Activated T-helper 1 cell treated with anti-CD3 and anti-CD28 coated beads, Interleukin-12 subunit alpha, Interleukin-12 subunit beta, Interleukin-2, Interleukin-4 antibody, amounts not matched to agents 30 ng/mL and 10 ng/mL and 1 ng/mL, durations not matched to agents 14 hours and 24 hours and 36 hours (primary cell): ENCODE measurements at regions of chr22 and their contacts with region 1.

Region 1: DNA sequence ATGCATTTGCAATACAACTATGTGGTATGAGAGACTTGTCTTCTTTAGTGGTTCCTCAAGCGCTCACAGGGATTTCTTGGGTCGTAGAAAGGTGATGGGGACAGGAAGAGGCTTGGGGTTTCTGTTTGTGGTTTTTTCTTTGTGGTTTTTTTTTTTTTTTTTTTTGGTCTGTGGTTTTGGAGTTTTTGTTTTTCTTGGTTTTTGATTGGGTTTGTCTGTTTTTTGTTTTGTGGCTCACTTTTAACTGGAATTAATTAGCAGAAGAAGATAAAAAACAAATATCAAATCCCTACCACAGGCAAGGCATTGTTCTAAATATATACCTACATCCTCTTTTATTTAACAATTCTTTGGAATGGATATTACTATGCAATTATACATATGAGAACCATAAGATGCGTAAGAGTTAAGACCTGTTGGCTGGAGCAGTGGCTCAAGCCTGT is 5.5 kb downstream of the TTC28 start:
- DNase-seq: peak; percentile 37
- H3K4me3 Mint-ChIP-seq: peak overlapping the region; percentile 73
- H3K27ac Mint-ChIP-seq: peak overlapping the region; percentile 99
- H3K4me1 Mint-ChIP-seq: peaks cover 30% of the 10 kb centered on the region
- H3K27me3 Mint-ChIP-seq: peaks cover 75% of the 10 kb centered on the region

Region 2: GRCh38 chr22:28497188-28497587 is 177.0 kb before region 1 on chr22:
- intact Hi-C with region 1: no loop called
- DNase-seq: no peak
- H3K4me3 Mint-ChIP-seq: no peak overlapping the region
- H3K27ac Mint-ChIP-seq: no peak overlapping the region
- H3K4me1 Mint-ChIP-seq: no peaks in the 10 kb centered on the region
- H3K27me3 Mint-ChIP-seq: peaks cover 46% of the 10 kb centered on the region

Region 3: GRCh38 chr22:28714043-28714442 is 39.9 kb after region 1 on chr22:
- intact Hi-C with region 1: loop called (anchors 2 kb)
- DNase-seq: no peak
- H3K4me3 Mint-ChIP-seq: no peak overlapping the region
- H3K27ac Mint-ChIP-seq: no peak overlapping the region
- H3K4me1 Mint-ChIP-seq: peaks cover 42% of the 10 kb centered on the region
- H3K27me3 Mint-ChIP-seq: no peaks in the 10 kb centered on the region

Region 4: GRCh38 chr22:28750471-28750881 is 76.3 kb after region 1 on chr22:
- intact Hi-C with region 1: no loop called
- DNase-seq: no peak
- H3K4me3 Mint-ChIP-seq: no peak overlapping the region
- H3K27ac Mint-ChIP-seq: no peak overlapping the region
- H3K4me1 Mint-ChIP-seq: peaks cover 10% of the 10 kb centered on the region
- H3K27me3 Mint-ChIP-seq: no peaks in the 10 kb centered on the region

Region 5: DNA sequence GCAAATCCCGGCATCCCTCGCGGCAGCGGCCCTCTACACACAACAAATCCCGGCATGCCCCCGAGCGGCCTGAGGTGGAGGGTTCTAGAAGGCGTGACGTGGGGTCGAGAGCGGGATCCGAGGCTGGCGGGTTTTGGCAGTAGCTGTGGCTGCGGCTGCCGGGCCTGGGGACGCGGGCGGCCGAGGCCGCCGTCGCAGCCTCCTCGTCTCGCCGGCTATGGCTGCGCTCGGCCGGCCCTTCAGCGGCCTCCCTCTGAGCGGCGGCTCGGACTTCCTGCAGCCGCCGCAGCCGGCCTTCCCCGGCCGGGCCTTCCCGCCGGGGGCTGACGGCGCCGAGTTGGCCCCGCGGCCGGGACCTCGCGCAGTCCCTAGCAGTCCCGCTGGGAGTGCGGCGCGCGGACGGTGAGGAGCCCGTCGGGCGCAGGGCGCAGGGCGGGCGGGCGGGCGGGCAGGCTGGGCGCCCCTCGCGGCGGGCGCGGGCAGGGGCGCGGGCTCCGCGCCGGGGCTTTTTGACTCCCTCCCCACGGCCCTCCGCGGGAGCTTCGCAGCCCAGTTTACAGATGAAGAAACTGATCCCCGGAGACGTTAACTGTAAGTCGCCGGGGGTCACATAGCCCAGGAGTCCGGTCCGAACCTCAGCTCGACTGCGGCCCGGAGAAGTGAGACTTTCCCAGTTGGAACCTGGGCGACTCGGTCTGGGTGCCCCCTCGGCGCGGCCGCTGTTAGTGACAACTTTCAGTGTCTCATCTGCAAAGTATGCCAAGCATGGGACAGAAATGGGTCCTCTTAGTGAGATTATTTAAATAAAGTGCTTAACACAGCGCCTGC is 98.7 kb after region 1 on chr22 and contains the start of gene CCDC117:
- intact Hi-C with region 1: loop called (anchors 1 kb)
- DNase-seq: peak; percentile 90
- H3K4me3 Mint-ChIP-seq: peak within 1 kb of the TSS; percentile 100
- H3K27ac Mint-ChIP-seq: peak within 1 kb of the TSS; percentile 100
- H3K4me1 Mint-ChIP-seq: peaks cover 22% of the 10 kb centered on the region
- H3K27me3 Mint-ChIP-seq: peaks cover 4% of the 10 kb centered on the region
- total RNA-seq, gene CCDC117: 46.4 and 52.8 TPM in 2 replicates

Region 6: DNA sequence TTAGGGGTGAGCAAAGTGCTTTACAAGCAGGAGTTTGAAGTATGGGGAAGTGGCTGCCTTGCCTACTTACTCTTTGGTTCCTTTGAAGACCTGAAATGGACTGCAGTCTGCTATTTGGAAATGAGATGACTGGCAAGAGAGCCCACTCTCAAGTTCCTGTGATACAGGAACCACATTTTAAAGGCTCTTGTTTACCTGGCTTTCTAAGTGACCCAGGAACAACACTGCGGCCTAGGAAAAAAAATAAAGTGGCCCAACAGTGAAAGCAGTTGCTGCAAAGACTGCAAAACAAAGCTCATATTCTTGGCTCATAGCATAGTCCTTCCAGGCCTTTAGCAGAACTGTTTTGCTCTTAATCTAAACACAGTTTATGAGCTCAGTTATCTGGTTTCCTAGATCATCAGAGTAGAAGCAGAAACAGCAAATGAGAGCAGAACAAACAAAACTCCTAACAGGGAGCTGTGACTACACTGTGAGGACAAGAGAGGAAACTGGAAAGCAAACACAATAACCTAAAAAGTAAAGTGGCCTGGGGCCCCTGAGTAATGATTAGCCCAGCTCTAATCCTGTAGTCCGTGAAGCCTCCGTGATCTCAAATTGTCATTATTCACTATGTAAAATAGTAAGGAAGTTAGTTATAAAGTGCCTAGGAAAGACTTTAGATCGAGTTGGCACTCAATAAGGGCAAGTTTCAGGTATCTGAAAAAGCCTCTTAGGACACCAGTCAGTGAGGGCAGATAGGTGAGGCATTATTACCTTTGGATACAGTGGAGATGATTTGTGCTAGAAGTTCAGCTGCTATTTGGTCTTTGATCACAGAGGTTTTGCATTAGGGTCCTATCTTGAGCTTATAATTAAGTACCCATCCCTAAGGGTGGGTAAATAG is 109.9 kb after region 1 on chr22:
- intact Hi-C with region 1: no loop called
- DNase-seq: no peak
- H3K4me3 Mint-ChIP-seq: no peak overlapping the region
- H3K27ac Mint-ChIP-seq: no peak overlapping the region
- H3K4me1 Mint-ChIP-seq: peaks cover 24% of the 10 kb centered on the region
- H3K27me3 Mint-ChIP-seq: no peaks in the 10 kb centered on the region

Region 7: GRCh38 chr22:28882878-28883656 is 208.9 kb after region 1 on chr22 and contains the start of gene ZNRF3:
- intact Hi-C with region 1: loop called (anchors 1 kb)
- DNase-seq: peak; percentile 78
- H3K4me3 Mint-ChIP-seq: peak within 1 kb of the TSS; percentile 79
- H3K27ac Mint-ChIP-seq: no peak within 1 kb of the TSS
- H3K4me1 Mint-ChIP-seq: peaks cover 14% of the 10 kb centered on the region
- H3K27me3 Mint-ChIP-seq: peaks cover 67% of the 10 kb centered on the region
- total RNA-seq, gene ZNRF3: 1.9 and 2.1 TPM in 2 replicates

Region 8: GRCh38 chr22:28955817-28956216 is 281.7 kb after region 1 on chr22:
- intact Hi-C with region 1: loop called (anchors 1 kb)
- DNase-seq: peak; percentile 76
- H3K4me3 Mint-ChIP-seq: peak overlapping the region; percentile 61
- H3K27ac Mint-ChIP-seq: peak overlapping the region; percentile 67
- H3K4me1 Mint-ChIP-seq: peaks cover 17% of the 10 kb centered on the region
- H3K27me3 Mint-ChIP-seq: peaks cover 89% of the 10 kb centered on the region

Region 9: DNA sequence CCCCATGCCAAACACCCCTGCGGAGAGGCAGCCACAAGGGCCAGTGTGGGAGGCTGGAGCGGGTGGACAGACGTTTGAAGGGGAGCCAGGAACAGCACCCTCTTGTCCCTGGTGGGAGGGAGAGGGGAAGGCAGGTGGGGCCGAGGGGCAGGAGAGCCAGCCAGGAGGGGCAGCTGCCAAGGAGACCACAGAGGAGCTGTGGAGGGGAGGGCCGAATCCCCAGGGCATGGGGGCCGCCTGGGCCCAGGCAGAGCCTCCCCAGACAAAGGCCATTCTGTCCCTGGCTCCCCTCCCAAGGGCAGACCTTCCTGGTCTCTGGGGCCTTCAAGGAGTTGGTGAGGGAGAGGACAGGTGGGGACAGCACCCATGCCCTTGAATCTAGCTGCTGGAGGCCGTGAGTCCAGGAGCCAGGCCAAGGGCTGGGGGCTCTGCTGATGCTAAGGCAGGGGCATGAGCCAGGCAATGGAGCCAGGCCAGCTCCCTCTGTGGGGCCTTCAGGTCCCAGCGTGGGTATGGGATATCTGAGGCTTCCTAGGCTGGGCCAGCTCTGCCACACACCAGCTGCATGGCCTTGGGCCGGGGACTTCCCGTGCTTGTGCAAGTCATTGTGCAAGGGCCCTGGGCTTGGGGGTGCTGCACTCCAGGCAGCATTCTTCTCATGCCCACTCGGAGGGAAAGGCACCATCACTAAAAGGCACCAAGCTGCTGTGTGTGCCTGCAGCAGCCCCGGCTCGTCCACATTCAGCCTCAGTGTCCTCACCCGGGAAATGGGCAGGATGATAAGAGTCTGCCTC is 542.9 kb after region 1 on chr22:
- intact Hi-C with region 1: no loop called
- DNase-seq: no peak
- H3K4me3 Mint-ChIP-seq: no peak overlapping the region
- H3K27ac Mint-ChIP-seq: no peak overlapping the region
- H3K4me1 Mint-ChIP-seq: no peaks in the 10 kb centered on the region
- H3K27me3 Mint-ChIP-seq: peaks cover 11% of the 10 kb centered on the region